ENCODE measurements at regions of chr11 and their contacts with region 1.

Region 1: GRCh38 chr11:32884770-32885384 is 7.7 kb upstream of the QSER1 start:
- DNase-seq: no peak
- ATAC-seq: no peak
- H3K4me3 ChIP-seq: no peak overlapping the region
- H3K27ac ChIP-seq: no peak overlapping the region
- H3K4me1 ChIP-seq: no peaks in the 10 kb centered on the region
- H3K27me3 ChIP-seq: peaks cover 0 to 10% (median 0%) of the 10 kb centered on the region in 7 donors
- CTCF ChIP-seq: peak in 7 of 9 donors; percentile 15 to 52 (median 43)

Region 2: GRCh38 chr11:33779849-33780528 is 895.1 kb after region 1 on chr11:
- intact Hi-C with region 1: loop called in 1 of 10 experiments (anchors 10 kb)
- DNase-seq: no peak
- ATAC-seq: peak; percentile 40 to 85 (median 65)
- H3K4me3 ChIP-seq: no peak overlapping the region
- H3K27ac ChIP-seq: peak overlapping the region in 4 of 10 donors; percentile 29 to 60 (median 48)
- H3K4me1 ChIP-seq: peaks cover 0 to 44% (median 22%) of the 10 kb centered on the region in 9 donors
- H3K27me3 ChIP-seq: peaks cover 0 to 19% (median 0%) of the 10 kb centered on the region in 7 donors
- CTCF ChIP-seq: no peak

Measured in heart right ventricle (tissue), 16 donors.